WTC11 (cell line): ENCODE measurements at regions of chr19 and their contacts with region 1.

Region 1: DNA sequence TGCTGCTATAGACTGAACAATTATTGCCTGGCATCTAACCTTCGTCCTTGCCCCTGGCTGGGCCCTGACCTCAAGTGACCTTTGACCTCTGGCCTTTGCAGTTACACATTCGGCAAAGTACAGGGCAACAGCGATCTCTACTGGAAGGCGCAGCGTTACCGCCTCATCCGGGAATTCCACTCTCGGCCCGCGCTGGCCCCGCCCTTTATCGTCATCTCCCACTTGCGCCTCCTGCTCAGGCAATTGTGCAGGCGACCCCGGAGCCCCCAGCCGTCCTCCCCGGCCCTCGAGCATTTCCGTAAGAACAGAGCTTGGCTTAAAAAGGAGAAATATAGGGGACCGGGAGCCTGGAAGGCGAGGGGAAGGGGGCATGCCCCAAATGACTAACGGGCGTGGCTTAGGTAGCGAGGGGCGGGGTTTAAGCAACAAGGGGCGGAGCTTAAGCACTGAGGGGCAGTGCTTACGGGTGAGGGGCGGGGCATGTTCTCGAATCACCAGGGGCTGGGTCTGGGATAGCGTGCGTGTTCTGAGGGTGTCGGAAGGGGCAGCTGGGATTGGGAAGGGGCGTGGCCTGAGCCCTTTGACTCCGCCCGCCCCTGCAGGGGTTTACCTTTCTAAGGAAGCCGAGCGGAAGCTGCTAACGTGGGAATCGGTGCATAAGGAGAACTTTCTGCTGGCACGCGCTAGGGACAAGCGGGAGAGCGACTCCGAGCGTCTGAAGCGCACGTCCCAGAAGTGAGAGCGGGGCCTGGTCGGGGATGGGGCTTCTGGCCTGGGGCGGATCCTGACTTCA is 52.7 kb downstream of the TRPM4 start:
- DNase-seq: peak; percentile 96
- ATAC-seq: peak; percentile 97
- H3K4me3 Mint-ChIP-seq: peak overlapping the region; percentile 75
- H3K27ac Mint-ChIP-seq: peak overlapping the region; percentile 92
- H3K4me1 Mint-ChIP-seq: peaks cover 7% of the 10 kb centered on the region
- H3K27me3 Mint-ChIP-seq: peaks cover 2% of the 10 kb centered on the region; the same call in 1 of the 2 replicates
- CTCF ChIP-seq: no peak

Region 2: GRCh38 chr19:49017666-49018351 is 192.5 kb before region 1 on chr19:
- CTCF ChIA-PET with region 1: interaction called, 11 read pairs
- POLR2A ChIA-PET with region 1: no interaction called
- DNase-seq: peak; percentile 66
- ATAC-seq: peak; percentile 71
- H3K4me3 Mint-ChIP-seq: peak overlapping the region; percentile 73
- H3K27ac Mint-ChIP-seq: no peak overlapping the region
- H3K4me1 Mint-ChIP-seq: peaks cover 23% of the 10 kb centered on the region
- H3K27me3 Mint-ChIP-seq: peaks cover 45% of the 10 kb centered on the region
- CTCF ChIP-seq: no peak

Region 3: GRCh38 chr19:49106648-49107135 is 103.6 kb before region 1 on chr19:
- CTCF ChIA-PET with region 1: interaction called, 14 read pairs
- POLR2A ChIA-PET with region 1: no interaction called
- DNase-seq: peak; percentile 83
- ATAC-seq: peak; percentile 80
- H3K4me3 Mint-ChIP-seq: peak overlapping the region; percentile 7; the same call in 1 of the 2 replicates
- H3K27ac Mint-ChIP-seq: peak overlapping the region; percentile 95
- H3K4me1 Mint-ChIP-seq: peaks cover 13% of the 10 kb centered on the region
- H3K27me3 Mint-ChIP-seq: no peaks in the 10 kb centered on the region
- CTCF ChIP-seq: peak; percentile 78

Region 4: GRCh38 chr19:49127674-49128544 is 82.4 kb before region 1 on chr19:
- CTCF ChIA-PET with region 1: interaction called, 14 read pairs
- POLR2A ChIA-PET with region 1: no interaction called
- DNase-seq: peak; percentile 98
- ATAC-seq: peak; percentile 90
- H3K4me3 Mint-ChIP-seq: peak overlapping the region; percentile 89
- H3K27ac Mint-ChIP-seq: peak overlapping the region; percentile 97
- H3K4me1 Mint-ChIP-seq: peaks cover 25% of the 10 kb centered on the region
- H3K27me3 Mint-ChIP-seq: peaks cover 66% of the 10 kb centered on the region
- CTCF ChIP-seq: no peak

Region 5: GRCh38 chr19:49224856-49225255 is 14.6 kb after region 1 on chr19:
- CTCF ChIA-PET with region 1: interaction called, 32 read pairs
- POLR2A ChIA-PET with region 1: interaction called, 7 read pairs
- DNase-seq: peak; percentile 79
- ATAC-seq: peak; percentile 82
- H3K4me3 Mint-ChIP-seq: no peak overlapping the region
- H3K27ac Mint-ChIP-seq: no peak overlapping the region
- H3K4me1 Mint-ChIP-seq: peaks cover 2% of the 10 kb centered on the region; the same call in 1 of the 2 replicates
- H3K27me3 Mint-ChIP-seq: peaks cover 8% of the 10 kb centered on the region
- CTCF ChIP-seq: peak; percentile 43

Region 6: GRCh38 chr19:49333418-49333805 is 123.1 kb after region 1 on chr19:
- CTCF ChIA-PET with region 1: no interaction called
- POLR2A ChIA-PET with region 1: no interaction called
- DNase-seq: no peak
- ATAC-seq: no peak
- H3K4me3 Mint-ChIP-seq: no peak overlapping the region
- H3K27ac Mint-ChIP-seq: no peak overlapping the region
- H3K4me1 Mint-ChIP-seq: peaks cover 21% of the 10 kb centered on the region
- H3K27me3 Mint-ChIP-seq: peaks cover 48% of the 10 kb centered on the region
- CTCF ChIP-seq: no peak